Activated naive CD4-positive, alpha-beta T cell treated with anti-CD3 and anti-CD28 coated beads for 36 hours (primary cell): ENCODE measurements at regions of chr12 and their contacts with region 1.

Region 1: DNA sequence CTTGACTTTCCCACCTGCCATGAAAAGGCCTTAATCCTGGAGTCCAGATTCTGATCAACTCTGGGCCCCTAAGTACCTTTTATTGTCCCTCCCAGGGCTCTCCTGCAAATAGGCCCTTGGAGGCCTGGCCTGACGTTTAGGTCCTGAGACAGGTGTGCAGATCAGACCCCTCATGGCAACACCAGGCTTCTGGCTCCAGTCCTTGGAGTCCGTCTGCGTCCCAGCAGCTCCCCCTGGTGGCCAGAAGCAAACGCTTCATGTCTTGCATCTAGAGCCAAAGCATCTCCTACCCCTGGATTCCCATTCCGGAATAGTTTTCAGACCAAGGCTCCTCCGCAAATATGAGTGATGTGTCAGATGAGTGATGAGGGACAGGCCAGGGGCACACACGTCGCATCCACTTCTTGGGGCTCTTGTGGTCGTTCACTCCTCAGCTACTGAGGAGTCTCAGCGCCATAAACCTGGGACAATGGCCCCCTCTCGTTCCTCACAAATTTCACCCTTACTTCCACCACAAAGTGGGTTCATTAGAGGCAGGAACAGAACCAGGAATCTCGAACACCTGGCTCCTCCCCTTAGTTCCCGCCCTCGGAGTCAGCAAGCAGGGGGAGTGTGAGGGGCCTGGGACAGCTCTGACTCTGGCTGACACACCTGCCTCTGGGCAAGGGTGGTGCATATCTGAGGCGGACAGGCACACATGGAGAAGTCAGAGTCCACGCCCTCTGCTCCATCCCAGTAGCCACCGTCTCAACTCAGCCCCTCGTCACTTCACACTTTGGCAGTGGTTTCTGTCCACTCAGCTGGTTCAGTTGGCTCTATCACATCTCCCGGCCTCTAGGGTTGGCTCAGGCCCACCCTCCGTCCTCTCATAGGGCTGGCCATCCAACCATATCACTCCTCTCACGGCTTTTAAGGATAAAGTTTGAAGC is 77.9 kb upstream of the PWP1 start:
- DNase-seq: peak; percentile 87
- H3K4me3 Mint-ChIP-seq: no peak overlapping the region
- H3K27ac Mint-ChIP-seq: no peak overlapping the region
- H3K4me1 Mint-ChIP-seq: no peaks in the 10 kb centered on the region
- H3K27me3 Mint-ChIP-seq: no peaks in the 10 kb centered on the region

Region 2: DNA sequence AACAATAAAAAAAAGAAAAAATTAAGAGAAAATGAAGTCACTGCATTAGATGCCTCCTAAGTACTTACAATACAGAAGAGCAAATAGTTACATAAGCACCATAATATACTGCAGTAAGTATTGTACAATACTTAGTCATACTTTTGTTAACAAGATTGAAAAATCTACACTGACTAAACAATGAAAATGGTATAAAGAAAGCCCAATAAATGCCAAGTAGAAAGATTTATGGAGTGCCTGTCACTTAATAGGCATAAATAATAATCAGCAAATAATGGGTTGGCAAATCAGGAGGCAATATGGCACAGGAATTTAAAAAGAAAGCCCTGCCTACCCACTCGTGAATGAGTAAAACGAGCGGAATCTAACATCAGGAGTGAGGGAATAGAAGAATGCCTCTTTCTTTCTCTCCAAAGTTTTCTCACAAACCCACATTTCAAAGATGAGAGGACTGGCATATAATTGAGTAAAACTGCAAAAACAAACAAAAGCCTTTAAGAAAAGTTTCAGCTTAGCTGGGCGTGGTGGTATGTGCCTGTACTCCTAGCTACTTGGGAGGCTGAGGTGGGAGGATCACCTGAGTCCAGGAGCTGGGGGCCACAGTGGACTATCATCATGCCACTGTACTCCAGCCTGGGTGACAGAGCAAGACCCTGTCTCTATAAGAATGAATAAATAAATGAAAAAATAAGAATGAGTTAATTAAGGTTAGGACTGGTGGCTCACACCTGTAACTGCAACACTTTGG is 550.5 kb before region 1 on chr12:
- CTCF ChIA-PET with region 1: no interaction called
- intact Hi-C with region 1: no loop called
- DNase-seq: no peak
- H3K4me3 Mint-ChIP-seq: no peak overlapping the region
- H3K27ac Mint-ChIP-seq: no peak overlapping the region
- H3K4me1 Mint-ChIP-seq: peaks cover 5% of the 10 kb centered on the region
- H3K27me3 Mint-ChIP-seq: no peaks in the 10 kb centered on the region

Region 3: GRCh38 chr12:107178776-107179175 is 429.0 kb before region 1 on chr12:
- CTCF ChIA-PET with region 1: no interaction called
- intact Hi-C with region 1: loop called (anchors 1 kb)
- DNase-seq: no peak
- H3K4me3 Mint-ChIP-seq: no peak overlapping the region
- H3K27ac Mint-ChIP-seq: no peak overlapping the region
- H3K4me1 Mint-ChIP-seq: peaks cover 10% of the 10 kb centered on the region
- H3K27me3 Mint-ChIP-seq: no peaks in the 10 kb centered on the region

Region 4: GRCh38 chr12:107393043-107393717 is 214.5 kb before region 1 on chr12:
- CTCF ChIA-PET with region 1: no interaction called
- intact Hi-C with region 1: no loop called
- DNase-seq: peak; percentile 61
- H3K4me3 Mint-ChIP-seq: no peak overlapping the region
- H3K27ac Mint-ChIP-seq: no peak overlapping the region
- H3K4me1 Mint-ChIP-seq: peaks cover 67% of the 10 kb centered on the region
- H3K27me3 Mint-ChIP-seq: no peaks in the 10 kb centered on the region

Region 5: GRCh38 chr12:107468182-107468581 is 139.5 kb before region 1 on chr12:
- CTCF ChIA-PET with region 1: interaction called, 4 read pairs
- intact Hi-C with region 1: loop called (anchors 5 kb)
- DNase-seq: no peak
- H3K4me3 Mint-ChIP-seq: no peak overlapping the region
- H3K27ac Mint-ChIP-seq: no peak overlapping the region
- H3K4me1 Mint-ChIP-seq: peaks cover 17% of the 10 kb centered on the region
- H3K27me3 Mint-ChIP-seq: no peaks in the 10 kb centered on the region

Region 6: GRCh38 chr12:107847830-107848229 is 240.1 kb after region 1 on chr12:
- CTCF ChIA-PET with region 1: no interaction called
- intact Hi-C with region 1: no loop called
- DNase-seq: no peak
- H3K4me3 Mint-ChIP-seq: no peak overlapping the region
- H3K27ac Mint-ChIP-seq: no peak overlapping the region
- H3K4me1 Mint-ChIP-seq: peaks cover 2% of the 10 kb centered on the region
- H3K27me3 Mint-ChIP-seq: peaks cover 41% of the 10 kb centered on the region